IMR-90 (cell line): ENCODE measurements at regions of chr4 and their contacts with region 1.

Region 1: DNA sequence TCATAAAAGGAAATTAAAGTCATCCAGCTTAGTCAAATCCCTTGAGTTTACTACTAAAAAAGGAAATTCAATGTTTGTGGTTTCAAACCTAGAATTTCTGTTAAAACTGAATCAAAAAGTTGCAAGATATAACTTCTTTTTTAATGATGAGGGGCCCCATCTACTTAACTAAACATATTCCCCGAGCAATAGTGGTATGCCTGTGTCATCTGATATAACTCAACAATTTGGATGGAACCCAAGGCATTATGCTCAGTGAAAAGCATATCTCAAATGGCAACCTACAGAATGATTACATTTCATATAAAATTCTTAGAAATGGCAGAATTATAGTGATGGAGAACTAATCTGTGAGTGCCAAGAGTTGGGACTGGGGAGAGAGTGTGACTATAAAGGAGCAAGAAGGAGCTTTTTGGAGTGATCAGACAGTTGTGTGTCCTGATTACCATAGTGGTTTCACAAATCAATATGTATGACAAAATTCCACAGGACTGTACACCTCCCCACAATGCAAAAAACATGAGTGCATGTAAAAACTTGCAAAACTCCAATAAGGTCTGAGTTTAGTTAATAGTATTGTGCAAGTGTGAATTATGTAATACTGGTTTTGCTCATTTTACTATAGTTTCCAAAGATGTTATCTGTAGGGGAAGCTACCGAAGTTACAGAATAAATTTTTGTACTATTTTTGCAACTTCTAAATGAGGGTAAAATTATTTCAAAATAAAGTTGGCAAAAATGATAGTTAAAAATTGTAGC is 323.2 kb downstream of the ARHGAP24 start:
- DNase-seq: no peak
- ATAC-seq: no peak
- H3K4me3 ChIP-seq: no peak overlapping the region
- H3K27ac ChIP-seq: no peak overlapping the region
- H3K4me1 ChIP-seq: peaks cover 2% of the 10 kb centered on the region; the same call in 1 of the 2 replicates
- H3K27me3 ChIP-seq: no peaks in the 10 kb centered on the region
- CTCF ChIP-seq: no peak
- POLR2A ChIP-seq: no peak
- RAD21 ChIP-seq: no peak

Region 2: DNA sequence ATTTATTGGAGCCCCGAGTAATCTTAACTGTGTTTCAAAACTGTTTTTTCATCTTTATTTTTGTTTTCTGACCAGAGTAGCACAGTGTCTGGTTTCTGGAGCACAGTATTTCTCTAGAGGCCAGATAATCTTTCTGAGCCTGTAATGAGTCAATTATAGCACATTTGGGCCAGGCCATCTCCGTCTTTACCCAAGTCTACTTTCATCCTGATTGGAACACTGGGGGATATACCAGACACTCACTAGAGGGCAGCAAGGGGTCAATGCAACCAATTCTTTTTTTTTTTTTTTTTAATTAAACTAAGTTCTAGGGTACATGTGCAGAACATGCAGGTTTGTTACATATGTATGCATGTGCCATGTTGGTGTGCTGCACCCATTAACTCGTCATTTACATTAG is 41.3 kb before region 1 on chr4:
- CTCF ChIA-PET with region 1: interaction called, 16 read pairs
- POLR2A ChIA-PET with region 1: no interaction called
- dilution Hi-C with region 1: no loop called
- in situ Hi-C with region 1: no loop called
- intact Hi-C with region 1: loop called (anchors 2 kb)
- DNase-seq: peak; percentile 62
- ATAC-seq: peak; percentile 87
- H3K4me3 ChIP-seq: no peak overlapping the region
- H3K27ac ChIP-seq: no peak overlapping the region
- H3K4me1 ChIP-seq: peaks cover 10% of the 10 kb centered on the region; the same call in 1 of the 2 replicates
- H3K27me3 ChIP-seq: no peaks in the 10 kb centered on the region
- CTCF ChIP-seq: peak; percentile 64
- POLR2A ChIP-seq: no peak
- RAD21 ChIP-seq: peak; percentile 67

Region 3: GRCh38 chr4:85778632-85779131 is 19.5 kb before region 1 on chr4:
- CTCF ChIA-PET with region 1: interaction called, 24 read pairs
- POLR2A ChIA-PET with region 1: no interaction called
- dilution Hi-C with region 1: no loop called
- in situ Hi-C with region 1: no loop called
- intact Hi-C with region 1: no loop called
- DNase-seq: peak; percentile 38
- ATAC-seq: peak; percentile 71
- H3K4me3 ChIP-seq: peak overlapping the region; percentile 100
- H3K27ac ChIP-seq: peak overlapping the region; percentile 95
- H3K4me1 ChIP-seq: peaks cover 9% of the 10 kb centered on the region; the same call in 1 of the 2 replicates
- H3K27me3 ChIP-seq: no peaks in the 10 kb centered on the region
- CTCF ChIP-seq: no peak
- POLR2A ChIP-seq: peak; percentile 46
- RAD21 ChIP-seq: no peak

Region 4: GRCh38 chr4:85968945-85969819 is 171.0 kb after region 1 on chr4:
- CTCF ChIA-PET with region 1: interaction called, 21 read pairs
- POLR2A ChIA-PET with region 1: no interaction called
- dilution Hi-C with region 1: no loop called
- in situ Hi-C with region 1: no loop called
- intact Hi-C with region 1: loop called (anchors 1 kb)
- DNase-seq: peak; percentile 72
- ATAC-seq: peak; percentile 72
- H3K4me3 ChIP-seq: no peak overlapping the region
- H3K27ac ChIP-seq: no peak overlapping the region
- H3K4me1 ChIP-seq: peaks cover 6% of the 10 kb centered on the region; the same call in 1 of the 2 replicates
- H3K27me3 ChIP-seq: no peaks in the 10 kb centered on the region
- CTCF ChIP-seq: peak; percentile 69
- POLR2A ChIP-seq: no peak
- RAD21 ChIP-seq: peak; percentile 73

Region 5: GRCh38 chr4:86223472-86223871 is 425.3 kb after region 1 on chr4:
- CTCF ChIA-PET with region 1: no interaction called
- POLR2A ChIA-PET with region 1: no interaction called
- dilution Hi-C with region 1: no loop called
- in situ Hi-C with region 1: no loop called
- intact Hi-C with region 1: loop called (anchors 5 kb)
- DNase-seq: peak; percentile 13
- ATAC-seq: peak; percentile 59; the same call in 1 of the 2 replicates
- H3K4me3 ChIP-seq: no peak overlapping the region
- H3K27ac ChIP-seq: no peak overlapping the region
- H3K4me1 ChIP-seq: no peaks in the 10 kb centered on the region; the same call in 1 of the 2 replicates
- H3K27me3 ChIP-seq: no peaks in the 10 kb centered on the region
- CTCF ChIP-seq: peak; percentile 36
- POLR2A ChIP-seq: no peak
- RAD21 ChIP-seq: peak; percentile 37; the same call in 1 of the 2 replicates